Naive thymus-derived CD8-positive, alpha-beta T cell (primary cell): ENCODE measurements at regions of chr15 and their contacts with region 1.

Region 1: DNA sequence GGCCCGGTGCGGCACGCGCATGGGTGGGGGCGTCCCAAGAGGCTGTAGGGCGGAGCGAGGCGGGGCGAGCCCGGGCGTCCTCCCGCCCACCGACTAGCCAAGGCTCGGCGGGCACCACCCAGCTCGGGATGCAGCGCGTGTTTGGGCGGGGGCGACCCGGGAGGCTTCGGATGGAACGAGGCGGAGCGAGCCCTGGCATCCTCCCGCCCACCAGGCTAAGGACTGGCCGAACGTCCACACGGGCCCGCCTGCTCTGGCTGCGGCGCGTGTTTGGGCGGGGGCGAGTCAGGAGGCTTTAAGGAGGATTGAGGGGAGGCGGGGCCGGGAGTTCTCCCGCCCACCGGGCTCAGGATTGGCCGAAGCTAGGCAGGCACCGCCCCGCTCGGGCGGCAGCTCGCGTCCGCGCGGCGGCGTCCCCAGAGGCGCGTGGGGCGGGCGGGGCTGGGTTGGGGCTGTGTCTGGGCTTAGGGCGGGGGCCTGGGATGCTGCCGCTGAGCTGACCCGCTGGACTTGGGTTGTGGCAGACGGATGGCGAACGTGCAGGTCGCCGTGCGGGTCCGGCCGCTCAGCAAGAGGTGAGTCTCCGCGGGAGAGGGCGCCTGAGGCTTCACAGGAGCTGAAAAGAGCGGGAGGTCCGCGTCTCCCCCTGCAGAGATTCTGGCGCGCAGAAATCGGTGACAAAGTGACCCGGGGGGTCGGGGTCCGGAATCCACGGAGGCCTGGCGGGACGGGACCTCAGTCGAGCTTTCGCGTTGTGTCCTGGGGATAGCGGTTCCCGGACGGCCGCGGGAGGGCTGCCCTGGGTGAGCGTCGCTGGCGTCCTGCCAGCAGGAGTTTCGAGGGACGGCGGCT is at the start of gene STARD9:
- DNase-seq: peak; percentile 88 to 98 (median 92)
- ATAC-seq: peak; percentile 89 to 94
- H3K4me3 Mint-ChIP-seq: peak within 1 kb of the TSS; percentile 87 to 97 (median 92)
- H3K27ac Mint-ChIP-seq: peak within 1 kb of the TSS; percentile 13 to 94 (median 86)
- H3K4me1 Mint-ChIP-seq: peaks cover 11 to 33% (median 32%) of the 10 kb centered on the region in 4 donors
- H3K27me3 Mint-ChIP-seq: peaks cover 0 to 10% (median 0%) of the 10 kb centered on the region in 5 donors
- polyA plus RNA-seq, gene STARD9: 0.10 to 0.53 (median 0.33) TPM

Region 2: GRCh38 chr15:42107473-42107872 is 467.9 kb before region 1 on chr15:
- POLR2A ChIA-PET with region 1: no interaction called
- DNase-seq: no peak
- ATAC-seq: peak in 1 of 2 donors; percentile 10
- H3K4me3 Mint-ChIP-seq: no peak overlapping the region
- H3K27ac Mint-ChIP-seq: no peak overlapping the region
- H3K4me1 Mint-ChIP-seq: peaks cover 0 to 10% (median 5%) of the 10 kb centered on the region in 4 donors
- H3K27me3 Mint-ChIP-seq: peaks cover 3 to 45% (median 23%) of the 10 kb centered on the region in 5 donors

Region 3: DNA sequence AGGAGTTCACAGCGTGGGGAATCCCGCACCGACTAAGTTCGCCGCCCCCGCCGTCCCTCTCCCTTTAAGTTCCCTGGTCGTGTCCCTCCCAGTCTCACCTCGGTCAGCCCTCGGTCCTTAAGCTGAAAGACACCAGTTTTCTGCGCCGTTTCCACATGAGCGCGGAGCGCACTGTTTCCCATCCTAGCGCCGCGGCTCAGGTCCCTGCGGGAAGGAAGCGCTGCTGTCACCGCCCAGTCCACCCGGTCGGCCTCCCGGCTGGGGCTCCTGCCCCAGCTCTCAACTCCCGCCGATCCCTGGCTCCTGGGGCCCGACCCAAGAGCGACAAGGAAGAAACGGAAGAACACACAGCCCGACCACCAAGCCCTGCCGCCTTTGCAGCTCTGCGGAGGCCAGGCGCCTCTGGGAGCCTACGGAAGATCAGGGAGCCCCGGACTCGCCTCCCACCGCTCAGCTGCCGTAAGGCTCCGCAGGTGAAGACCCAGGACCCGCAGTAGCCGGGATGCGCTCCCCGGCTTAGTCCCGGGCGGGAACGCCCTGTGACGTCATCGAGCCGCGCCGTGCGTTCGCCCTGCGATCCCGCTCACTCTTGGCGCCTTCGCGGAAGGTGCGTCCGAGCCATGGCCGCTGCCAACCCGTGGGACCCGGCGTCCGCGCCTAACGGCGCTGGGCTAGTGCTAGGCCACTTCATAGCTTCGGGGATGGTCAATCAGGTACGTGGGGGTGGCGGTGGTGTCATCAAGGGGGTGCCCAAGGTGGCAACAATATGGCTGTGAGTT is 27.0 kb before region 1 on chr15 and contains the starts of genes HAUS2 and LRRC57:
- POLR2A ChIA-PET with region 1: interaction called, 25 read pairs
- DNase-seq: peak; percentile 79 to 91 (median 86)
- ATAC-seq: peak; percentile 84 to 94
- H3K4me3 Mint-ChIP-seq: peak within 1 kb of the TSS; percentile 92 to 99 (median 95)
- H3K27ac Mint-ChIP-seq: peak within 1 kb of the TSS; percentile 93 to 99 (median 98)
- H3K4me1 Mint-ChIP-seq: peaks cover 26 to 60% (median 50%) of the 10 kb centered on the region in 4 donors
- H3K27me3 Mint-ChIP-seq: no peaks in the 10 kb centered on the region
- polyA plus RNA-seq, gene HAUS2: 20.8 to 25.4 (median 24.9) TPM
- polyA plus RNA-seq, gene LRRC57: 3.3 to 6.4 (median 5.5) TPM

Region 4: DNA sequence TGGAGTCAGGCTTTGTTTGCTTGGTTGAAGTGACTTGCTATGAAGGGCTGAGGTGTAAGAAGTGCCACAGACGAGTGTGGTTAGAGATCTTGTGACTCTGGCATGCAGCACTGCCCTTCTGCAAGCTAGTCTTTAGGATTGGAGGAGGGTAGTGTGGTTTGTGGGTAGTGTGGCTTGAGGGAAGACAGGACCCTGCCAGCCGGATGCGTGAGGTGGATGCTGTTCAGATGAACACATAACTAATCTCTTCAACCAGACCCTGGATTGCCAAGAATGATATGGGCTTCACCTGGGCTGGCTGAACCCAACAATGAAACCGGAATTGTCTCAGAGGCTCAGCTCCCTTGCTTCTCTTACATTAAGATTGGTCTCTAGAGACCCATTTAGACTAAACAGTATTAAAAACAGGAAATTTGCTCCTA is 32.7 kb after region 1 on chr15:
- POLR2A ChIA-PET with region 1: interaction called, 26 read pairs
- DNase-seq: peak; percentile 8 to 64 (median 41)
- ATAC-seq: peak; percentile 75 to 76
- H3K4me3 Mint-ChIP-seq: peak overlapping the region; percentile 61 to 79 (median 71)
- H3K27ac Mint-ChIP-seq: peak overlapping the region; percentile 24 to 91 (median 82)
- H3K4me1 Mint-ChIP-seq: peaks cover 25 to 63% (median 55%) of the 10 kb centered on the region in 4 donors
- H3K27me3 Mint-ChIP-seq: no peaks in the 10 kb centered on the region

Region 5: DNA sequence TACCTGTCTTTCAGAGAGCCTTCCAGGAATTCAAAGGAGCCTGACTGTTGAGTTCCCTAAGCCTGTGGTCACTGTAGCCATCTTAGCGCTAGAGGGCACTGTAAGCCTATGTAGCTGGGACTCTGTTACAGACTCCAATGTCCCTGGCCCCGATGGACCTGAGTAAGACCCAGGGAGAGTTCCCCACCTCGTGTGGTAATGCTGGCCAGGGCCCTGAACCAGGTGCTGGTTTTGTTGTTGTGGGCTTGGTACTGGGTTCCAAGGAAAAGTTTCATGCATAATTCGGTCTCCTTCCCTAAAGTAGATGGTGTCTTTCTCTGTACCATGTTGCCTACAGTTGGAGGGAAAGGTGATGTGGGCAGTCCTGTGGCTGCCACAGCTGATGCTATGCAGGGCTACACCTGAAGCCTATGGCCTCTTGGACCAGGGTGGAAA is 129.1 kb after region 1 on chr15:
- POLR2A ChIA-PET with region 1: no interaction called
- DNase-seq: peak; percentile 20 to 75 (median 52)
- ATAC-seq: peak; percentile 90 to 94
- H3K4me3 Mint-ChIP-seq: no peak overlapping the region
- H3K27ac Mint-ChIP-seq: peak overlapping the region in 1 of 10 donors; percentile 1
- H3K4me1 Mint-ChIP-seq: peaks cover 0 to 2% (median 0%) of the 10 kb centered on the region in 4 donors
- H3K27me3 Mint-ChIP-seq: no peaks in the 10 kb centered on the region

Region 6: GRCh38 chr15:42788725-42789124 is 213.3 kb after region 1 on chr15:
- POLR2A ChIA-PET with region 1: no interaction called
- DNase-seq: no peak
- ATAC-seq: no peak
- H3K4me3 Mint-ChIP-seq: no peak overlapping the region
- H3K27ac Mint-ChIP-seq: no peak overlapping the region
- H3K4me1 Mint-ChIP-seq: peaks cover 0 to 2% (median 0%) of the 10 kb centered on the region in 4 donors
- H3K27me3 Mint-ChIP-seq: no peaks in the 10 kb centered on the region